GM23248 (cell line): ENCODE measurements at regions of chr6 and their contacts with region 1.

Region 1: DNA sequence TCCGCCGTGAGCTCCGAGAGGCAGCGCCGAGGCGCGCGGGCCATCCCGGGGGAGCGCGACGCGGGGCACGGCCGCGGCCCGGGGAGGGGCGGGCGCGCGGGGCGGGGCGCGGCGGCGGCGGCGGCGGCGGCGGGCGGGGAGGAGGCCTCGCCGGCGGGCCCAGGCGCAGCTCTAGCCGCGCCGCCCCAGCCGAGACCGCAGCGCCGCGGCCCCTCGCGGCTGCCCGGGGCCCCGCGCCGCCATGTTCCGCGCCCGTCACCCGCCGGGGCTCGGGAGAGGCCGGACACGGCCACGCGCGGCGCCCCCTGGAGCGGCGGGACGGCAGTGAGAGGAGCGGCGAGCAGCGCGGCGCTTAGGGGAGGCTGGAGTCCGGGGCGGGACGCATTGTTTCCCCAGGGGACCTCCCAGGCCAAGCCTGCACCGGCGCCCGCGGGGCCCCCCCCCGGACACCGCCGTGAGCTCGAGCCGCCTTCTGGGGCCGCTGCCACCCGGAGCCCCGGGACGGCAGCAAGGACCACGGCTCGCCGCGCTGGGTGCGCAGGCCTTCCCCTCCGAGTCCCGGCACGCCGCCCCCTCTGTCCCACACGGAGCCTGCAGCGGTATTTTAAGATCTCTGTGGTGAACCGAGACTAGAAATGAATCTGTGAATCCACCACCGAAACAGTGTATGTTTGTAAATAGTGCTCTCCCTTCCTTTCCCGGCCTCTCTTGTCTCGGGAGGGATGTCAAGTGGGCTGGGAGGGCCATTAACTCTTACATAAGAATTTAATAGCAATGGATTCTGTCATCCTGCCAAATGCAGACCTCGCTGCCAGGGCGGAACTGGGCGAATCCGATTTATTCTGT is at the start of gene KIF13A:
- DNase-seq: peak; percentile 84
- H3K4me3 ChIP-seq: peak within 1 kb of the TSS; percentile 94
- H3K27ac ChIP-seq: peak within 1 kb of the TSS; percentile 68
- H3K4me1 ChIP-seq: peaks cover 16% of the 10 kb centered on the region
- H3K27me3 ChIP-seq: no peaks in the 10 kb centered on the region
- total RNA-seq, gene KIF13A: 46.0 and 47.3 TPM in 2 replicates

Region 2: GRCh38 chr6:17845598-17845997 is 142.2 kb before region 1 on chr6:
- in situ Hi-C with region 1: loop called (anchors 10 kb)
- DNase-seq: no peak
- H3K4me3 ChIP-seq: no peak overlapping the region
- H3K27ac ChIP-seq: no peak overlapping the region
- H3K4me1 ChIP-seq: peaks cover 1% of the 10 kb centered on the region
- H3K27me3 ChIP-seq: no peaks in the 10 kb centered on the region

Region 3: GRCh38 chr6:18585032-18585573 is 597.3 kb after region 1 on chr6:
- in situ Hi-C with region 1: no loop called
- DNase-seq: peak; percentile 90
- H3K4me3 ChIP-seq: no peak overlapping the region
- H3K27ac ChIP-seq: peak overlapping the region; percentile 2; the same call in 1 of the 2 replicates
- H3K4me1 ChIP-seq: peaks cover 11% of the 10 kb centered on the region; the same call in 1 of the 2 replicates
- H3K27me3 ChIP-seq: no peaks in the 10 kb centered on the region